PC-3 (cell line): ENCODE measurements at regions of chr7 and their contacts with region 1.

Region 1: DNA sequence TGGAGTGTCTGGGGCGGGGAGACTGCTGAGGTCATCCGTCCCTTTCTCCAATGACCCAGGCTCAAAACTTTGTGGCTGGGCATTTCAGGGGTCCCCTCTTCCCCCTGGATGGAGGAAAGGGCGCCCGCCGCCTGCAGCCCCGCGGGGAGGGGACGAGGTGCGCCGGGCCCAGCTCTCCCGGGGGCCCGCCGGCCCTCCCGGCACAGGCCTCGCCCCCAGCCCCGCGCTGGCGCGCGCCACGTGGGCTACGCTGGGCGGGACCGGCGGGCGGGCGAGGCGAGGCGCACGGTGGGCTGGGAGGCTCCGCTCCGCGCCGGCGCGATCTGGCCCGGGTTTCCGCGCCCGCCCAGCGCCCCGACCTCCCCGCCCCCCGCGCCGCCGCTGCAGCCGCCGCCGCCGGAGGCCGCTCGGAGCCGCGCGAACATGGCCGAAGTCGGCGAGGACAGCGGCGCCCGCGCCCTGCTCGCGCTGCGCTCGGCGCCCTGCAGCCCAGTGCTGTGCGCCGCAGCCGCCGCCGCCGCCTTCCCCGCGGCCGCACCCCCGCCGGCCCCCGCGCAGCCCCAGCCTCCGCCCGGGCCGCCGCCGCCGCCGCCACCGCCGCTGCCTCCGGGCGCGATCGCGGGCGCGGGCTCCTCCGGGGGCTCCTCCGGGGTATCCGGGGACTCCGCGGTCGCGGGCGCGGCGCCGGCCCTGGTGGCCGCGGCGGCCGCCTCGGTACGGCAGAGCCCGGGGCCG is at the start of gene FOXK1:
- DNase-seq: peak; percentile 67
- ATAC-seq: peak; percentile 65
- H3K4me3 ChIP-seq: peak within 1 kb of the TSS; percentile 71
- H3K27ac ChIP-seq: peak within 1 kb of the TSS; percentile 59
- H3K4me1 ChIP-seq: peaks cover 13% of the 10 kb centered on the region; the same call in 1 of the 2 replicates
- H3K27me3 ChIP-seq: no peaks in the 10 kb centered on the region
- CTCF ChIP-seq: no peak
- total RNA-seq, gene FOXK1: 13.2 and 22.8 TPM in 2 replicates

Region 2: DNA sequence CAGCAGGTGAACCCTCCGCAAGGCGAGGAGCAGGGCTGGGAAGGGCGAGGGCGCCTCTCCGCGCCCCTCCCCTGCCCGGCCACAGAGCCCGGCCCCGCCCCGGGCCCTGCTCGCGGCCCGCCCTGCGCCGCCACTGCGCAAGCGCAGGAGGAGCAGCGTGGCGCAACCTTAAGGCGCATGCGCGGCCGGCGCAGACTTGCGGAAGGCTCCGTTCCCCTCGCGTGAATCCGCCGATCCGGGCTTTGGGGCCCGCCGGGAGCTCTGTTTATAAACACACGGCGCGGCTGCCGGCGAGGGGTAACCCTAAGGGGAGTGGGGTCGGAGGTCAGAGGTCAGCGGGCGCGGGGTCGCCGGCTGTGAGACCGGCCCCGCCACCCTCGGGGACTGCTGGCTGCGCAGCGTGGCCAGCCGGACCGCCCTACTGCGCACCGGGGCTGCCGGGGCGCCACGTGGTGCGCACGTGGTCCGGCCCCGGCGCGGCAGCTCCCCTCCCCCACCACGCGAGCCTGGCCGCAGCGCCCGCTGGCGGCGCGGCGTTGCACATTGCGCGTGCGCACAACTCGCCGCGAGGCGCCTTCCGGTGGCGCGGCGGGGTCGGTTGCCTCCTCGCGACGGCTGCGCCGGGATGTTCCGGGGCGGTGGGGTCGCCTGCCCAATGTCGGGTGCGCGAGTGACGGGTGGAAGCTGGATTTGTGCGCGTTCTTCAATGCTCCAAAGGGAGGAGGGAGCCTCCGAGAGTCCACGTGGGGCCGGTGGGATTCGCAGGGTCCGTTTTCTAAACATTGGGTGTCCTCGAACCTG is 40.2 kb before region 1 on chr7:
- CTCF ChIA-PET with region 1: interaction called, 4 read pairs
- POLR2A ChIA-PET with region 1: interaction called, 4 read pairs
- intact Hi-C with region 1: loop called (anchors 1 kb)
- DNase-seq: peak; percentile 95
- ATAC-seq: peak; percentile 97
- H3K4me3 ChIP-seq: peak overlapping the region; percentile 67
- H3K27ac ChIP-seq: peak overlapping the region; percentile 44; the same call in 1 of the 2 replicates
- H3K4me1 ChIP-seq: peaks cover 8% of the 10 kb centered on the region
- H3K27me3 ChIP-seq: no peaks in the 10 kb centered on the region
- CTCF ChIP-seq: peak; percentile 36; the same call in 1 of the 2 replicates

Region 3: GRCh38 chr7:4725014-4725849 is 43.2 kb after region 1 on chr7:
- CTCF ChIA-PET with region 1: no interaction called
- POLR2A ChIA-PET with region 1: no interaction called
- intact Hi-C with region 1: loop called (anchors 1 kb)
- DNase-seq: peak; percentile 60
- ATAC-seq: peak; percentile 86
- H3K4me3 ChIP-seq: peak overlapping the region; percentile 73
- H3K27ac ChIP-seq: peak overlapping the region; percentile 64
- H3K4me1 ChIP-seq: peaks cover 9% of the 10 kb centered on the region; the same call in 1 of the 2 replicates
- H3K27me3 ChIP-seq: no peaks in the 10 kb centered on the region
- CTCF ChIP-seq: no peak

Region 4: DNA sequence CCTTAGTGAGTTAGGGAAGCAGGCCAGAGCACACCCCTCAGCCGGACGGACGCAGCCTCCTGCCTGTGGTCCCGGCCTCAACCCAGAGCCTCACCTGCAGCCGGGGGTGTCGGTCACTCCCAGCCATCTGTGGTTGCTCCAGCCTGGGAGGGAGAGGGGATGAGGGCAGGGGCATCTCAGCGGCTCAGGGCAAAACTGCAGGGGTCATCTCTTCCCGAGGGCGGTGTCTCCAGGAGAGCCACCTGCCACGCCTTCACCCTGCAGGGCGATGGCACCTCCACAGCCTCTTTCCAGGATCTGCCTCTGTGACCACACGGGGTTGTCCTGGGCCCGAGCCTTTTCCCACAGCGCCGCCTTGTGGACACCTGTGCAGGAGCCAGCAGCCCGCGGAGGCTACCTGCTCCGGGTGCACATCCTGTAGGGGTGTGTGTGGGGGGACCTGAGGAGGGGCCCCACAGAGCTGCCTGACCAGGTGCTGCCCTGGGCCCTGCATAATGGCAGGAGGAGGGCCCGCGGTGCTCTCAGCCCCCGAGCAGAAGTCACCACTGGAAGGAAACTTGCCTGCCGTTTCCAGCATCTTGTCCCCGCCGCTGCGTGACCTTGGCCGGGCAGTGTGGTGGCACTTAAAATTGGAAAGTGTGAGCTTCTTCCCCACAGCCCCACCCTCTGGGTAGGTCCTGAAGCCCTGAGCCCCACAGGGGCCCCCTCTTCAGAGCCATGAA is 71.8 kb after region 1 on chr7:
- CTCF ChIA-PET with region 1: no interaction called
- POLR2A ChIA-PET with region 1: no interaction called
- intact Hi-C with region 1: loop called (anchors 2 kb)
- DNase-seq: peak; percentile 79
- ATAC-seq: peak; percentile 99
- H3K4me3 ChIP-seq: no peak overlapping the region
- H3K27ac ChIP-seq: no peak overlapping the region
- H3K4me1 ChIP-seq: no peaks in the 10 kb centered on the region
- H3K27me3 ChIP-seq: no peaks in the 10 kb centered on the region
- CTCF ChIP-seq: peak; percentile 89

Region 5: GRCh38 chr7:5425507-5426225 is 743.6 kb after region 1 on chr7:
- CTCF ChIA-PET with region 1: no interaction called
- POLR2A ChIA-PET with region 1: no interaction called
- intact Hi-C with region 1: no loop called
- DNase-seq: peak; percentile 79
- ATAC-seq: peak; percentile 12
- H3K4me3 ChIP-seq: peak overlapping the region; percentile 83
- H3K27ac ChIP-seq: peak overlapping the region; percentile 92
- H3K4me1 ChIP-seq: peaks cover 24% of the 10 kb centered on the region; the same call in 1 of the 2 replicates
- H3K27me3 ChIP-seq: no peaks in the 10 kb centered on the region
- CTCF ChIP-seq: no peak